K562 (cell line): ENCODE measurements at regions of chr5 and their contacts with region 1.

Region 1: DNA sequence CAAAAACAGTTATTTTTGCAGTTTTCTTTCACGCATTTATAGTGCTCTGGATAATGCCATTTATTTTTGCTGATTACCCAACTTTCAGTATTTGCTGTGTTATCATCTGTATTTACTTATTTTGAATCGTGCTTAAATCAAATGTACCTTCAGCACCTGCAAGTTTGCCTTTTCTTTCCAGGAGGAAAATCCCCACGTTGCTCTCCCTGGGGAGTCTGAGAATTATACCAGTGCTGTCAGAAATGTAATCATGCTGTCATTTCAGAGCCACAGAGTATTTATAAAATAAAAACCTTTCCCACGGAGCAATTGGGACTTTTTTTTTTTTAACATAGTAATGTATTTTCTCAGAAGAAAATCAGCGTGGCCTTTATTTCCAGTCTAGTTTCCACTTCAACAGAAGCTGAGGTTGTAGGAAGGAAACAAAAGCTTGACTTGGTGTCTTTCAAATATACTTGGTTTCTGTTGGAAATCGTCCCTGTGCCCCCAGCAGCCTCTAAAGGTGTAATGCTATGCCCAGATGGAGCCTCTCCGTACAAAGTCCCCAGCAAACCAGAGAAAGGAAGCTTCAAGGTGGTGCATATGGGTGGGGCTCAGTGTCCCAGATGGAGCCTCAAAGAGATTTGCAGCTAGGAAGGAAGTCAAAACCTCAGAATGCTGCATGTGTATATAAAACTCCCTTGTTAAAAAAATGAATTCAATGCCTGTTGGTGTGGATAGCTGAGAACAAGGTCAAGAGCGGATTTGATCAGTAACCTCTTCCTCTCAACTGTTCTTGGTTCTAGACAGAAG is 2.1 kb downstream of the GPR150 start:
- DNase-seq: no peak
- ATAC-seq: no peak
- H3K4me3 ChIP-seq: no peak overlapping the region
- H3K27ac ChIP-seq: no peak overlapping the region
- H3K4me1 ChIP-seq: no peaks in the 10 kb centered on the region
- H3K27me3 ChIP-seq: no peaks in the 10 kb centered on the region
- CTCF ChIP-seq: no peak
- EP300 ChIP-seq: no peak
- POLR2A ChIP-seq: no peak
- RAD21 ChIP-seq: no peak

Region 2: GRCh38 chr5:95631991-95632675 is 10.1 kb after region 1 on chr5:
- CTCF ChIA-PET with region 1: no interaction called
- POLR2A ChIA-PET with region 1: interaction called, 12 read pairs
- in situ Hi-C with region 1: no loop called
- intact Hi-C with region 1: no loop called
- DNase-seq: peak in 3 of 4 experiments; percentile 15 to 62 (median 29)
- ATAC-seq: peak; percentile 91
- H3K4me3 ChIP-seq: no peak overlapping the region
- H3K27ac ChIP-seq: peak overlapping the region; percentile 34; the same call in 2 of the 3 replicates
- H3K4me1 ChIP-seq: peaks cover 0 to 13% of the 10 kb centered on the region in 2 experiments; a peak in 4 of 5 replicates
- H3K27me3 ChIP-seq: no peaks in the 10 kb centered on the region
- CTCF ChIP-seq: no peak
- EP300 ChIP-seq: no peak; the same call in 1 of the 2 replicates
- POLR2A ChIP-seq: 0 out of 2 replicates have a peak, but pooled peaks have one; percentile 45
- RAD21 ChIP-seq: no peak

Region 3: DNA sequence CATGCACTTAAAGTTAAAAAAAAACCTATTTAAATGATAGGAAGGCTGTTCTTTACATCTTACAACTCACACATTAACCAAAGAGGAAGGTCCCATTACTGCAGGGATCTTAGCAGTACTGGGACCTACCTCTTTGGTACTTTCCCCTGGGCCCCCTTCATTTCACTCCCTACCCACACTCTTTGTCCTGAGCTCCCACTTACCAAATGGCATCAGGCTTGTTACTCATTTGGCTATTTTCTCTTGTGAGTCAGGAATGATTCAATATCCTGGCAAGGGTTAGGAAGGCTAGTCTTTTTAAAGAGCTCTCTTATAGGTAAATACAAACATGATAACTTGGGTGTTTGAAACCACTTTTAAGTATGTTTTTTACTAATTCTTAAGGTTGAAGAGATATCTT is 457.0 kb after region 1 on chr5:
- CTCF ChIA-PET with region 1: no interaction called
- POLR2A ChIA-PET with region 1: no interaction called
- in situ Hi-C with region 1: no loop called
- intact Hi-C with region 1: no loop called
- DNase-seq: no peak
- ATAC-seq: no peak
- H3K4me3 ChIP-seq: no peak overlapping the region
- H3K27ac ChIP-seq: no peak overlapping the region
- H3K4me1 ChIP-seq: peaks cover 0 to 8% of the 10 kb centered on the region in 2 experiments; a peak in 2 of 5 replicates
- H3K27me3 ChIP-seq: no peaks in the 10 kb centered on the region
- CTCF ChIP-seq: no peak
- EP300 ChIP-seq: no peak
- POLR2A ChIP-seq: no peak
- RAD21 ChIP-seq: no peak